AG04449 (cell line): ENCODE measurements at regions of chr14 and their contacts with region 1.

Region 1: DNA sequence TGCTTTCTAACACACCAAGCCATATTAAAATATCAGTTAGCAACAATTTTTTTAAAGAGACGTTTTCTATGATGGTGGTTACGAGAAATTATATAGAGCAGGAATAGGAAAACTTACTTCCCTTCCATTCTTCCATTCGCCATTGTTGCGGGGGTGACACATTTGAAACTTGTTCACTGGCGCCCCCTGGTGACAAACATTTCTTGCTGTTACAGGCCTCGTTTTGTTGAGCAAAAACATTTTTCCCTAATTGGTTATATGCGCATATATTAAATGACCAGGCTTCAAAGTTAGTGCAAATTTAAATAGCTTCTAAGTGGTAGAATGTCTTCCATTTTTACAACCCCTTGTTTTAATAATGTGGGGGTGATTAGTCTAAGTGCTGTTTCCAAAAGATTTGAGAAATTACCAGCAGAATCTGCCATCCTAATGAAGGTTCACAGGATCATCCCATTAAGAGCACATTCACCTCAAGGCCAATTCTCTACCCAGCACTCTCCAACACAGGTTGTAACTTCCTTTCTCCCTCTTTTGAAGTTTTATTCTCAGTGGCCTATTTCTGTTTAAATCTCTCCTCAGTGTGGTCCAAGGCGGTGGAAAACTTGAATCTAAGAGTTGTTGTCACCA is 1124.7 kb downstream of the FLRT2 start:
- DNase-seq: no peak
- H3K4me3 ChIP-seq: no peak overlapping the region
- CTCF ChIP-seq: peak; percentile 14

Region 2: GRCh38 chr14:86462193-86462753 is 192.4 kb before region 1 on chr14:
- CTCF ChIA-PET with region 1: interaction called, 12 read pairs
- POLR2A ChIA-PET with region 1: no interaction called
- DNase-seq: no peak
- H3K4me3 ChIP-seq: no peak overlapping the region
- CTCF ChIP-seq: peak; percentile 31

Region 3: DNA sequence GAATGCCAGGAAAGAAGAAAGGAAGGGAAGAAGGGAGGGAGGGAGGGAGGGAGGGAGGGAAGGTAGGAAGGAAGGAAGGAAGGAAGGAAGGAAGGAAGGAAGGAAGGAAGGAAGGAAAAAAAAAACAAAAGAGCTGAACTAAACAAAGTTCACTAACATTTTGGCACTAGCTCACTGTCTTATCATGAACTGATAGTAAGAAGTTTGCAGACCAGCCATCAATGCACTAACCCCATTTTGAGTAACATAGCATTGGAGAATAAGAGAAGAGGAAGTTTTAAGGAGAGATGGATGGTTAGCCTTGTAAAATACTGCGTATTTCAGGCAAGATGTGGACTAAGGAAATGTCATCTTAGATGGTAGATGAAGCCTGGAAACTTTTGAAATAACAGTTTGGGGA is 11.3 kb after region 1 on chr14:
- CTCF ChIA-PET with region 1: interaction called, 17 read pairs
- POLR2A ChIA-PET with region 1: no interaction called
- DNase-seq: no peak
- H3K4me3 ChIP-seq: no peak overlapping the region
- CTCF ChIP-seq: no peak